OCI-LY7 (cell line): ENCODE measurements at regions of chr5 and their contacts with region 1.

Region 1: DNA sequence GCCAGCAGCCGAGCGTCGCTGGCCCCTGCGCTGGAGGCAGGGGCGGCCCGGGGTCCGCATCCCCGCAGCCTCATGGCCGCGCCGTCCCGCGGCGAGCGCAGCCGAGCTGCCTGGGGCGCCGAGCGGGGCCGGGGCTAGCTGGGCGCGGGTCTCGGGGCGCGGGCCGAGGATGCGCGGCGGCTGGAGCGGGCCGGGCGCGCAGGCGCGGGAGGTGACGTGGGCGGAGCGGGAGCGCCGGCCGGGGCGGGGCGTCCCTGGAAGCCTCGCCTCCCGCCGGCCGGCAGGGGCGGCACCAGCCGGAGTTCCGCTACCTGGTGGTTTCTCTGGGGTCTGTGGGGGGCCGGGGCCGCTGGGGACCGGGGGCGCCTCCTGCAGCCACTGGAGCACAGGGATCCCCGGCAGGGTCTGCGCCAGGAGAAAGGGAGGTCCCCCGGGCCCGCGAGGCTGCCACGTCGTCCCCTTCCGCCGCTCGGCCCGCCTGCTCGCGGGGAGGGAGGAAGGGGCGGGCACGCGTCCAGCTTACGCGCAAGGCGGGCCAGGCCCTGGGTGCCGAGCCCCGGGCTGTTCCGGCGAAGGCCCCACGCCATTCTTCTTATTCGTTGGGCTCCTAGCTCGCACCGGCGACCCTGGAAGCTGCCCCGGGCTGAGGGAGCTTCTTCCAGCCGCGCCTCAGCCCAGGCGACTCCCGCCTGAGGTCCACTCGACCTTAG is at the start of gene LPCAT1:
- DNase-seq: peak; percentile 83
- H3K4me3 ChIP-seq: peak within 1 kb of the TSS; percentile 90
- H3K27ac ChIP-seq: peak within 1 kb of the TSS; percentile 87
- H3K4me1 ChIP-seq: peaks cover 50% of the 10 kb centered on the region
- CTCF ChIP-seq: no peak
- total RNA-seq, gene LPCAT1: 47.7 and 69.1 TPM in 2 replicates

Region 2: DNA sequence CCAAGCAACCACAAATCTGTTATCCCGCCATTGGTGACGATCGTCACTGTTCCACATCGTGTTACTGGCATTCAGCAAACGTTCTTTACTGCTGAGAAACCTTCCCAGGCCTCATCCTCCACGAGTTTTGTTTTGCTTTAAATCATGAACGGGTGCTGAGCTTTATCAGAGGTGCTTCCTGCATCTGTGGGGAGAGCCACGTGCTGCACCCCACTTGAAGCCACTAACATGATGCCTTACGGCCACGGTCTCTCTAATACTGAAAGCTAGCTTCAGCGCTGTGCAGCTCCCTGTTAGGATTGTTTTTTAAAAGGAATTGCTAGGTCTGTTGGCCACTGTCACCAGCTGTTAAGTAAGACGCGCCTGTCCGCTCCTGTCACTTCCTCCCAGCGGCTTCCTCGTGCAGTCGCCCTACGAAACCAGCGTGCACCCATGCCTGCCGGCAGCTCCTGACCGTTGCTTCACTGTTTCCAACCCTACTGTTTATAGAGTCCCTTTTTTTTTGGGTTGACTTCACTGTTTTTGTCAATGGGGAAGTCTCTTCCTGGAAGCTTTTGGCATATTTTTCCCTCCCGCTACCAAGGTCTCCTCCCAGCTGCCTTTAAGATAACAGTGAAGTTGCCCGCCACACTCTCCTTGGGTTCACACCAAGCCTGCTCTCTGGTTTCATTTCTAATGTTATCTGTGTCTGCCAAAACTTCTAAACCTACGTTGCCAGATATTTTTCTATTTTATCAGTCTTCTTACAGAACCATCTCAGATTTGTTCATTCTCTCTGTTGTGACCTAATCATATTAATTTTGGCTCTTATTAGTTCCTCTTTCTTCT is 20.5 kb before region 1 on chr5:
- CTCF ChIA-PET with region 1: interaction called, 3 read pairs
- POLR2A ChIA-PET with region 1: interaction called, 5 read pairs
- intact Hi-C with region 1: loop called (anchors 2 kb)
- DNase-seq: peak; percentile 53
- H3K4me3 ChIP-seq: peak overlapping the region; percentile 55
- H3K27ac ChIP-seq: peak overlapping the region; percentile 85
- H3K4me1 ChIP-seq: peaks cover 52% of the 10 kb centered on the region
- CTCF ChIP-seq: no peak

Region 3: DNA sequence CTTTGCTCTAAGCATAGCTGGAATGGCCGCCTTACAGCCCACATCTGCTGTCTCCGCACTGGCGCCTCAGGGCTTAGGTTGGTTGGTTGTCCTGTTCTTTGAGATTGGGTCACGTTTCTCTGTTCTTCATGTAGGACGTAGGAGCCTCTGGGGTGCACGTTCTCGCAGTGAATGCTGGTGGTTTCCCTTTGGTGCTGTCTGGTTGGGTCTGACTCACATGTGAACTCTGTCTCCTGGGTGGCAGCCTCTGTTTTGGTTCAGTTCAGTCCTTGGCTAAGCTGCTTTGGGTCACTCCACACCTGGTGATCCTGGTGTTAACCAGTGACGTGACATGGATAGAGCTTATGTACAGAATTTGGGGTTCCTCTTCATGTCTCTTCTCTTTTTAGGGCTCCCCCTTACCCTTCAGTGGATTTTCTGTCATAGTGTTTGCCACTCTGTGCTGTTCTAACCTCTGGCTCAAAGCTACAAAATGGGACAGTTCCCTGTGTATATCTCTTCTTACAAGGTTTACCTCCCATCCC is 12.5 kb after region 1 on chr5:
- CTCF ChIA-PET with region 1: interaction called, 4 read pairs
- POLR2A ChIA-PET with region 1: interaction called, 20 read pairs
- intact Hi-C with region 1: no loop called
- DNase-seq: peak; percentile 58
- H3K4me3 ChIP-seq: peak overlapping the region; percentile 64
- H3K27ac ChIP-seq: peak overlapping the region; percentile 52
- H3K4me1 ChIP-seq: peaks cover 43% of the 10 kb centered on the region
- CTCF ChIP-seq: no peak

Region 4: DNA sequence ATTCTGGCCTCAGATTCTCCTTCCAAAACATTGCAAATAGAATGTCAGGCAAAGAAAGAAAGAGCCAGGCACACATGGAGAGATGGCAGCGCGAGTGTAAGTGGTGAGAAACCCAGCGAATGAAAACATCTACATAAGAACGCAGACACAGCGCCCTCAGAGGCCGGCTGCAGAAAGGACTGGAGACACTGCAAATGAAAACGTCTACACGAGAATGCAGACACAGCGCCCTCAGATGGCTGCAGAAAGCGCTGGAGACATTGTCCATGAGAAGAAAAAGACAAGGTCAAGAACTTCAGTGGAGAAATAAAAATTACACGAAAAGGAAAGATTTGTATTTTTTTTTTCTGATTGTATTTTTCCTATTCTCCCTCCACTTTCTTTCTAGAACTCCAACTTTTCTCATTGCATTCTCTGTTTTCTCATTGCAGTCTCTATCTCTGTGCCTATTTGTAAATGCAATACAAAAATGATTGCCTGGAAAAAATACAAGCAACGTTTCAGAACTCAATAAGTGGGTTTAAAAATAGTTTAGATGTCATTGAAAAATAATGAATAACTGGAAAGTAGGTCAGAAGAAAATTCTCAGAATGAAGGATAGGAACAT is 117.7 kb after region 1 on chr5:
- CTCF ChIA-PET with region 1: no interaction called
- POLR2A ChIA-PET with region 1: no interaction called
- intact Hi-C with region 1: loop called (anchors 5 kb)
- DNase-seq: peak; percentile 90
- H3K4me3 ChIP-seq: no peak overlapping the region
- H3K27ac ChIP-seq: no peak overlapping the region
- H3K4me1 ChIP-seq: peaks cover 8% of the 10 kb centered on the region
- CTCF ChIP-seq: peak; percentile 100

Region 5: GRCh38 chr5:1799602-1800471 is 275.9 kb after region 1 on chr5 and contains the start of gene MRPL36:
- CTCF ChIA-PET with region 1: no interaction called
- POLR2A ChIA-PET with region 1: no interaction called
- intact Hi-C with region 1: loop called (anchors 5 kb)
- DNase-seq: peak; percentile 93
- H3K4me3 ChIP-seq: peak within 1 kb of the TSS; percentile 87
- H3K27ac ChIP-seq: peak within 1 kb of the TSS; percentile 79
- H3K4me1 ChIP-seq: peaks cover 23% of the 10 kb centered on the region
- CTCF ChIP-seq: no peak
- total RNA-seq, gene MRPL36: 82.5 and 91.7 TPM in 2 replicates